ENCODE measurements at regions of chr7 and their contacts with region 1.

Region 1: DNA sequence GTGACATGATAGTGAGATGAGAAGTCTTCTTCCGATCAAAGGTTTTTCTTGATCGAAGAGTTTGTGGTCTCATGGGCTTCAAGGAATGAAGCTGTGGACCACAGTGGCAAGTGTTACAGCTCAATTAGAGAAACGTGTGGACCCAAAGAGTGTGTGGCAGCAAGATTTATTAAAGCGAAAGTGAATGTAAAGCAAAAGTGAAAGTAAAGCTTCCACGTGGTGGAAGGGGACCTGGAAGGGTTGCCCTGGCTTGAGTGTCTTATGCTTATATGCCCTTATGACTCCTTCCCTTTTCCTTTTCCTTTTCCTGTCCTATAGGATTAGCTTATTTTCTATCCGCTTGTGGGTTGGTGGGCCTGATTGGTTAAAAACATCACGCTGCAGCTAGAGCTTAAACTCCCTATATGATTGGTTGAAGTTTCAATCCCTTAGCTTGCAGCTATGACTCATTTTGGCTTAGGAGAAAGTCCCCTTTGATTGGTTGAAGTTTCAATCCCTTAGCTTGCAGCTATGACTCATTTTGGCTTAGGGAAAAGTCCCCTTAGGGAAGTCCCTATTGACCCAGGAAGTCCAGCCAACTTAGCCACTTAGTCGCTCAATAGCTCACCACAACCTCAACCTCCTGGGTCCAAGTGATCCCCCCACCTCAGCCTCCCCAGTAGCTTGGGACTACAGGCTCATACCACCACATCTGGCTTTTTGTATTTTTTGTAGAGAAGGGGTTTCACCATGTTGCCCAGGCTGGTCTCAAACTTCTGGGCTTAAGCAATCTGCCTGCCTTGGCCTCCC is 34.7 kb downstream of the MRPS24 start:
- DNase-seq: peak; percentile 51
- ATAC-seq: peak; percentile 75
- H3K4me3 Mint-ChIP-seq: peak overlapping the region; percentile 82
- H3K27ac Mint-ChIP-seq: peak overlapping the region; percentile 91
- H3K4me1 Mint-ChIP-seq: peaks cover 22% of the 10 kb centered on the region
- H3K27me3 Mint-ChIP-seq: peaks cover 4% of the 10 kb centered on the region

Region 2: GRCh38 chr7:43439631-43440401 is 394.8 kb before region 1 on chr7:
- CTCF ChIA-PET with region 1: interaction called, 10 read pairs
- POLR2A ChIA-PET with region 1: no interaction called
- DNase-seq: peak; percentile 68
- ATAC-seq: peak; percentile 81
- H3K4me3 Mint-ChIP-seq: no peak overlapping the region
- H3K27ac Mint-ChIP-seq: no peak overlapping the region
- H3K4me1 Mint-ChIP-seq: no peaks in the 10 kb centered on the region
- H3K27me3 Mint-ChIP-seq: peaks cover 9% of the 10 kb centered on the region

Region 3: GRCh38 chr7:43553999-43554398 is 280.7 kb before region 1 on chr7:
- CTCF ChIA-PET with region 1: no interaction called
- POLR2A ChIA-PET with region 1: no interaction called
- DNase-seq: no peak
- ATAC-seq: peak; percentile 81
- H3K4me3 Mint-ChIP-seq: no peak overlapping the region
- H3K27ac Mint-ChIP-seq: peak overlapping the region; percentile 55
- H3K4me1 Mint-ChIP-seq: peaks cover 31% of the 10 kb centered on the region
- H3K27me3 Mint-ChIP-seq: peaks cover 15% of the 10 kb centered on the region

Region 4: GRCh38 chr7:43721193-43721806 is 113.4 kb before region 1 on chr7:
- CTCF ChIA-PET with region 1: interaction called, 18 read pairs
- POLR2A ChIA-PET with region 1: no interaction called
- DNase-seq: no peak
- ATAC-seq: no peak
- H3K4me3 Mint-ChIP-seq: no peak overlapping the region
- H3K27ac Mint-ChIP-seq: no peak overlapping the region
- H3K4me1 Mint-ChIP-seq: peaks cover 39% of the 10 kb centered on the region
- H3K27me3 Mint-ChIP-seq: no peaks in the 10 kb centered on the region

Region 5: GRCh38 chr7:43735802-43736541 is 98.7 kb before region 1 on chr7:
- CTCF ChIA-PET with region 1: interaction called, 25 read pairs
- POLR2A ChIA-PET with region 1: no interaction called
- DNase-seq: no peak
- ATAC-seq: no peak
- H3K4me3 Mint-ChIP-seq: no peak overlapping the region
- H3K27ac Mint-ChIP-seq: no peak overlapping the region
- H3K4me1 Mint-ChIP-seq: peaks cover 1% of the 10 kb centered on the region
- H3K27me3 Mint-ChIP-seq: peaks cover 3% of the 10 kb centered on the region

Region 6: DNA sequence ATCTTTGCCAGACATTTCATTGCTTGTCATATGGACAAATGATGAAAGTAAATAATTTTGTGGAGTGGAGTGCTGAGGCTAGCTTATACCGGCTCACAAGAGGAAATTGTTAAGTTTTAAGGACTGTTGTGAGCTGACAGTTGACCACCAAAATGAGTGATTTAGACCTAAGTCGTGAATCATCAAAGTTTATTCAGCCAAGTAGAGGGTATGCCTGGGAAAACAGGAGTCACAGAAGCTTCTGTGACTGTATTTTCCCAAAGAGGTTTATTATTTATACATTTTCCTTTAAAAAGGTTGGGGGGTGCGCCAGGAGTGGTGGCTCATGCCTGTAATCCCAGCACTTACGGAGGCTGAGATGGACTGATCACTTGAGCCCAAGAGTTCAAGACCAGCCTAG is 12.8 kb after region 1 on chr7:
- CTCF ChIA-PET with region 1: interaction called, 19 read pairs
- POLR2A ChIA-PET with region 1: no interaction called
- DNase-seq: no peak
- ATAC-seq: no peak
- H3K4me3 Mint-ChIP-seq: no peak overlapping the region
- H3K27ac Mint-ChIP-seq: no peak overlapping the region
- H3K4me1 Mint-ChIP-seq: peaks cover 7% of the 10 kb centered on the region
- H3K27me3 Mint-ChIP-seq: peaks cover 8% of the 10 kb centered on the region

Region 7: DNA sequence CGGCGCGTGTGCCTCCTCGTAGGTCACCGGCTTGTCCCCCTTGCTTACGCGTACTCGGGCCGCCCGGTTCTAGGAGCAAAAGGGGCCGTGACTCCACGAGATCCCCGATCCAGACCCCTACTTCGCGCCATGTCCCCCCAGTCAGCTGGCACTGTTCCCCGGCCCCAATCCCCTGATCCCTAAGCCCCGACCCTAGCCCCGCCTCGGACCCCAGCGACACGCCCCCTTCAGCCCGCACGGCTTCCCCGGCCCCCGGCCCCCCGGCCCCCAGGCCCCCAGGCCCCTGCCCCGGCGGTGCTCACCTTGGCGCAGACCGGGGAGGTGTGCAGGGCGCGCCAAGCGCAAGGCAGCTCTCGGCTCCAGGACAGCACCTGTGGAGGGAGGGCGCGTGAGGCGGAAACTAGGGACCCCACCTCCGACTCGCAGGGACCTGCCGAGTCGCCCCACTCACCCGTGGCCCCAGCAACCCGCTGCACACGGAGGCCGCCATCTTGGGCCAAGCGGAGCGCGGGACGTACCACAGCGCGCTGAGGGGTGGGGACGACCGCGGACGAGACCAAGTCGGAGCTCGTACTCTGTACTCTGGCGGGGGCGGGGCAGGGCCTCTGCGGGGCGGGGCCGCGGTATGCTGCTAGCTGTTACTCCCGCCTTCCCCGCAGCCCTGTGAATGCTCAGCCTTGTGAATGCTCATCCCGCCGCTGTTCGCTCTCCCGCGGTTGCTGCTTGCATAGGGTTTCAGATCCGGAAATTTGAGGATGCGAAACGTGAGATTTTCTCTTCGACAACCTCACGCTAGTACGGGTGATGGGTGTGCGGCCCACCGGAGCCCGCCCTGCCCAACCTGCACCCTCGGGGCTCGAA is 34.6 kb after region 1 on chr7 and contains the start of gene MRPS24:
- CTCF ChIA-PET with region 1: interaction called, 12 read pairs
- POLR2A ChIA-PET with region 1: interaction called, 3 read pairs
- DNase-seq: peak; percentile 96
- ATAC-seq: peak; percentile 99
- H3K4me3 Mint-ChIP-seq: peak within 1 kb of the TSS; percentile 87
- H3K27ac Mint-ChIP-seq: peak within 1 kb of the TSS; percentile 84
- H3K4me1 Mint-ChIP-seq: peaks cover 24% of the 10 kb centered on the region
- H3K27me3 Mint-ChIP-seq: peaks cover 6% of the 10 kb centered on the region
- total RNA-seq, gene MRPS24: 88.5 to 91.3 TPM